Heart left ventricle (tissue), 16 donors: ENCODE measurements at regions of chr11 and their contacts with region 1.

Region 1: DNA sequence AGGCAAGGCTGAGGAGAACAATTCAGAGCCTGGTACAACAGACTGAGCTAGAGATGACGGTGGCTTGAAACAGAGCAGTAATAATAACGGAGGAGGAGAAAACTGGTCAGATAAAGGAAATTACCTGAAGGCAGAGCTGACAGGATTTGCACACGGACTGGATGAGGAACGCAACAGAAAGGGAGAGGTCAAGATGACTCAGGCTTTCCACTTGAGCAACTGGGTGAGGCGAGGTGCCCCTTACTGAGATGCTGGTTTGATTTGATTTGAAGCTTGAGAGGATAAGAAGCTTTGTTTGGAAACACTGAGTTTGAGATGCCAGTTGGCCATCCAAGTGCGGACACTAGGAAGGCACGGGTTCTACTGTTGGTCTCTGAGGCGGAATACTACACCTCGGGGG is 35.4 kb upstream of the NRIP3 start:
- DNase-seq: no peak
- ATAC-seq: no peak
- H3K4me3 ChIP-seq: no peak overlapping the region
- H3K27ac ChIP-seq: peak overlapping the region in 1 of 12 donors; percentile 47
- H3K4me1 ChIP-seq: peaks cover 0 to 5% (median 0%) of the 10 kb centered on the region in 12 donors
- H3K27me3 ChIP-seq: no peaks in the 10 kb centered on the region
- CTCF ChIP-seq: no peak
- POLR2A ChIP-seq: no peak

Region 2: GRCh38 chr11:8209208-8209807 is 829.9 kb before region 1 on chr11:
- intact Hi-C with region 1: loop called in 1 of 10 experiments (anchors 10 kb)
- DNase-seq: peak in 1 of 5 donors; percentile 80
- ATAC-seq: no peak
- H3K4me3 ChIP-seq: no peak overlapping the region
- H3K27ac ChIP-seq: no peak overlapping the region
- H3K4me1 ChIP-seq: peaks cover 0 to 30% (median 7%) of the 10 kb centered on the region in 12 donors
- H3K27me3 ChIP-seq: peaks cover 0 to 29% (median 0%) of the 10 kb centered on the region in 9 donors
- CTCF ChIP-seq: peak in 9 of 12 donors; percentile 8 to 58 (median 26)
- POLR2A ChIP-seq: no peak

Region 3: DNA sequence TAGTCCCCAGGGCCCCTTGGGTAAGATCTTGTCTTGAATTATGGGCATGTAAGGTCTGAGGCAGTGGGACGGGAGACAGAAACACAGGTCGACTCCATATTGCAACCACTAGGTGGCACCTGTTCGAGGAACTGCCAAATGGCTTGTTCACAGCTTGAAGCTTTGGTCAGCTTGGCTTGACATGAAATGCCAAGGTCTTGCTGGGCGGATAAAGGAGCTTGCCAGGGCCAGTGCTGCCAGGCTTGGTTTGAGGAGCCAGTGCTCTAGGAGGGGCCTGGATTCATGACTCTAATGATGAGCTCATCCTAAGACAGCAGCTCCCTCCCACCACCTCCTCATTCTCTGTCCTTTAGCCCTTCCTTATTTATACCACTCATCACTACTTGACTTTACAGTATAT is 23.5 kb before region 1 on chr11:
- intact Hi-C with region 1: no loop called
- DNase-seq: peak in 4 of 5 donors; percentile 48 to 61 (median 56)
- ATAC-seq: peak; percentile 41 to 83 (median 64)
- H3K4me3 ChIP-seq: no peak overlapping the region
- H3K27ac ChIP-seq: no peak overlapping the region
- H3K4me1 ChIP-seq: peaks cover 0 to 28% (median 17%) of the 10 kb centered on the region in 12 donors
- H3K27me3 ChIP-seq: no peaks in the 10 kb centered on the region
- CTCF ChIP-seq: peak; percentile 55 to 83 (median 74)
- POLR2A ChIP-seq: no peak

Region 4: GRCh38 chr11:9150501-9150900 is 111.3 kb after region 1 on chr11:
- intact Hi-C with region 1: no loop called
- DNase-seq: no peak
- ATAC-seq: peak in 1 of 4 donors; percentile 46
- H3K4me3 ChIP-seq: no peak overlapping the region
- H3K27ac ChIP-seq: peak overlapping the region in 1 of 12 donors; percentile 6
- H3K4me1 ChIP-seq: peaks cover 0 to 17% (median 4%) of the 10 kb centered on the region in 12 donors
- H3K27me3 ChIP-seq: no peaks in the 10 kb centered on the region
- CTCF ChIP-seq: no peak
- POLR2A ChIP-seq: no peak